Activated naive CD8-positive, alpha-beta T cell treated with anti-CD3 and anti-CD28 coated beads, Interleukin-2, amount 10 ng/mL, durations not matched to agents 7 days and 5 days (primary cell): ENCODE measurements at regions of chr12 and their contacts with region 1.

Region 1: DNA sequence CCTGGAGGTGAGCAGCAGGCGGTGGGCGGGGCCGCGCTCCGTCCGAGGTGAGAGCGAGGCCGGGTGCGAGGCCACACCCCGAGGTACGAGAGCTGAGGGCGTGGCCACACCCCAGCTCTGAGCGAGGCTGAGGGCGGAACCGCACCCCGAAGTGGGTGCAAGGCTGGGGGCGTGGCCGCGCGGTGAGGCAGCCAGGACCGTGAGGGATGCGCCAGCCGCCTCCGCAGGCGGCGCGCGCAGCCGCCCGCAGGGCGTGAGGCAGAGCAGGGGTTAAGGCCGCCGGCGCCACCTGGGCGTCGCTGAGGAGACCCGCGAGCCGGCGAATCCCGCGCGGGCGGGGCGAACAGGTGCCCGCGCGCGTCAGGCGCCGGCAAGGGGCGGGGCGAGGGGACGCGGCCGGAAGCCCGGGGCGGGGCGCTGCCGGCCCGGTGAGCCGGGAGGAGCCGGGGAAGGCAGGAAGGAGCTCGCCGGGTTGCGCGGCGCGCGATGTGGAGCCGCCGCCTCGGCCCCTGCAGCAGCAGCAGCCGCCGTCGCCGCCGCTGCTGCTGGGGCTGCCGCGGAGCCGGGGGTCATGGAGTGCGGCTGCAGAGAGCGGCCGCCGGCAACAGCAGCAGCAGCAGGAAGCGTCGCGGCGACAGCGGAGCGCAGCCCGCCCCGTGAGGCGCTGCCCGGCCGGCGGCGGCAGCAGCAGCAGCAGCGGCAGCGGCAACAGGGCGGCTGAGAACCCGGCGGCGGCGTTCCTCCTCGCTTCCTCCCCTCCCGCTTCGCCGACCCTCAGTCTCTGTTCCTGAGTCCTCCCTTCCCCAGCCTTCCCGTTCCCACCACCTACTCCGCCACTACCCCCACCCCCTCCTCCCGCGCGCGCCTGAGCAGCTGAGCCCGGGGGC is at the start of gene BICDL1:
- DNase-seq: peak; percentile 99
- ATAC-seq: peak; percentile 86
- H3K4me3 Mint-ChIP-seq: peak within 1 kb of the TSS; percentile 91
- H3K27ac Mint-ChIP-seq: peak within 1 kb of the TSS; percentile 85
- H3K4me1 Mint-ChIP-seq: peaks cover 28% of the 10 kb centered on the region
- H3K27me3 Mint-ChIP-seq: peaks cover 7% of the 10 kb centered on the region
- total RNA-seq, gene BICDL1: 98.5 to 100 TPM

Region 2: GRCh38 chr12:120007272-120007671 is 18.2 kb after region 1 on chr12:
- POLR2A ChIA-PET with region 1: interaction called, 76 read pairs
- DNase-seq: no peak
- ATAC-seq: peak; percentile 85
- H3K4me3 Mint-ChIP-seq: peak overlapping the region; percentile 67
- H3K27ac Mint-ChIP-seq: peak overlapping the region; percentile 90
- H3K4me1 Mint-ChIP-seq: peaks cover 49% of the 10 kb centered on the region
- H3K27me3 Mint-ChIP-seq: no peaks in the 10 kb centered on the region

Region 3: GRCh38 chr12:120013659-120014289 is 24.7 kb after region 1 on chr12:
- POLR2A ChIA-PET with region 1: interaction called, 76 read pairs
- DNase-seq: no peak
- ATAC-seq: peak; percentile 84
- H3K4me3 Mint-ChIP-seq: peak overlapping the region; percentile 55
- H3K27ac Mint-ChIP-seq: peak overlapping the region; percentile 88
- H3K4me1 Mint-ChIP-seq: peaks cover 49% of the 10 kb centered on the region
- H3K27me3 Mint-ChIP-seq: no peaks in the 10 kb centered on the region

Region 4: GRCh38 chr12:120086801-120087621 is 98.0 kb after region 1 on chr12:
- POLR2A ChIA-PET with region 1: interaction called, 28 read pairs
- DNase-seq: peak; percentile 99
- ATAC-seq: peak; percentile 96
- H3K4me3 Mint-ChIP-seq: peak overlapping the region; percentile 68
- H3K27ac Mint-ChIP-seq: peak overlapping the region; percentile 70
- H3K4me1 Mint-ChIP-seq: peaks cover 20% of the 10 kb centered on the region
- H3K27me3 Mint-ChIP-seq: no peaks in the 10 kb centered on the region

Region 5: GRCh38 chr12:120116792-120117651 is 128.0 kb after region 1 on chr12:
- POLR2A ChIA-PET with region 1: interaction called, 19 read pairs
- DNase-seq: peak; percentile 100
- ATAC-seq: peak; percentile 86
- H3K4me3 Mint-ChIP-seq: peak overlapping the region; percentile 96
- H3K27ac Mint-ChIP-seq: peak overlapping the region; percentile 89
- H3K4me1 Mint-ChIP-seq: peaks cover 61% of the 10 kb centered on the region
- H3K27me3 Mint-ChIP-seq: no peaks in the 10 kb centered on the region